ENCODE measurements at regions of chr3 and their contacts with region 1.

Region 1: DNA sequence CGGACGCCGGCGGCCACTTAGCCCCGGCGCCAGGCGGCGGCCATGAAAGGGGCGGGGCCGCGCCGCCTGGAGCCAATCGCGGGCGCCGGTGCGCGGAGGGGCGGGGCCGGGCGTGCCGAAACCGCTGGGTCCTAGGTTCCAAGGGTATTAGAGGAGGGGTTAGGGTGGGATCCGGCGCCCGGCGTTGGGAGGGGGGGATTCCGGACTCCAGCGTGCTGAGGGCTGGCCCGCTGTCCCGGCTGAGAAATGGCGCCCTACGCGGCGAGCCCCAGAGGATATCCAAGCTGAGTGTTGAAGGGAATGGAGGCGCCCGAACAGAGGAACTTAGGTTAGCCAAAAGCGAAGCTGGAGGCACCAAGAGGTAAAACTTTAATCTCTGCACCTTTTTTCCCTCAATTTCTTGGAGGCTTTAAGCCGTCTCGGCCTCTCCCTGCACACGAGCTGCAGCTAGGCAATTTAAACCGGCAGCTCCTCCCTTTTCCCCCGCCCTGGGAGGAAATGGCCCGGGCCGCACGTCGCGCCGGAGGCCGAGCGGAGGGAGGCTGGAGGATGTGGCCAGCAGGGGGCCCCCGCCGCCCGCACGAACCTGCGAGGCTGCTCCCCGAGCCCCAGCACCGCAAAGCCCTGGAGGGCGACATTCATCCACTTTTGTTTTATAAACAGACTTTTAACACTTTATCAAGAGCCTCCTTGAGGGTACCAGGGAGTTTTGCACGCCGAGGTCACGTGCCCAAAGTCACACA is at the start of gene XXYLT1:
- DNase-seq: peak; percentile 92
- H3K4me3 Mint-ChIP-seq: peak within 1 kb of the TSS; percentile 85
- H3K27ac Mint-ChIP-seq: peak within 1 kb of the TSS; percentile 91
- H3K4me1 Mint-ChIP-seq: peaks cover 29% of the 10 kb centered on the region
- H3K27me3 Mint-ChIP-seq: no peaks in the 10 kb centered on the region

Region 2: GRCh38 chr3:195259475-195260279 is 11.6 kb before region 1 on chr3:
- CTCF ChIA-PET with region 1: interaction called, 26 read pairs
- DNase-seq: peak; percentile 90
- H3K4me3 Mint-ChIP-seq: no peak overlapping the region
- H3K27ac Mint-ChIP-seq: peak overlapping the region; percentile 45
- H3K4me1 Mint-ChIP-seq: peaks cover 35% of the 10 kb centered on the region
- H3K27me3 Mint-ChIP-seq: peaks cover 4% of the 10 kb centered on the region

Region 3: DNA sequence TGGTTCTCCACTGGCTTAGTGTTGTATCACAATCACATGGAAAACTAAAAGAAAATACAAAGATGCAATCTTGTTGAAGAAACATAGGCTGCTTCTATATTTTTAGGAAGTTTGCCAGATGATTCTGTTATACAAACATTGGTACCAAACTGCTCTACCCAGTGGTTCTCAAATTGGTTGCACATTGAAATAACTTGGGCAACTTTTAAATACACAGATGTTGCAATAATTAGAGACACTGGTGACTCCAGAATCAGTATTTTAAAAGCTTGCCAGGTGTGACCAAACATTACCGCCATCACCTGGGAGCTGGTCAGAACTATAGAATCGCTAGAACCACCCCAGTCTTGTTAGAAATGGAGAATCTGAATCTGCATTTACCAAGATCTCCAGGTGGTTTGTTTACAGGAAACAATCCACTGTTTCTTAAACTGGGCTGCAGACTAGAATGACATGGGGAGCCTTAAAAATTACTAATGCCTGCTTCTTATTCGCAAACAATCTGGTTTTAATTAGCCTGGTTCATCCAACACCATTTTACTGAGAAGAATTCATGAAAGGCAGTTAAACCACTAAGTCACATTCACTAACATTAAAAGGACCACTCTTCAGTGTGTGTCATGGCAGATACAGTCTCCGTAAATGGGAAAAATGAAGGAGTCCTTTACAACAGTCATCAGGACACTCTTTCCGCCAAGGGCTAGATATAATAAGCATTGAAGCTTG is 95.1 kb after region 1 on chr3:
- CTCF ChIA-PET with region 1: no interaction called
- DNase-seq: no peak
- H3K4me3 Mint-ChIP-seq: no peak overlapping the region
- H3K27ac Mint-ChIP-seq: no peak overlapping the region
- H3K4me1 Mint-ChIP-seq: no peaks in the 10 kb centered on the region
- H3K27me3 Mint-ChIP-seq: no peaks in the 10 kb centered on the region

Region 4: GRCh38 chr3:195522254-195523023 is 251.2 kb after region 1 on chr3:
- CTCF ChIA-PET with region 1: interaction called, 111 read pairs
- DNase-seq: no peak
- H3K4me3 Mint-ChIP-seq: no peak overlapping the region
- H3K27ac Mint-ChIP-seq: peak overlapping the region; percentile 0
- H3K4me1 Mint-ChIP-seq: peaks cover 35% of the 10 kb centered on the region
- H3K27me3 Mint-ChIP-seq: no peaks in the 10 kb centered on the region

Region 5: GRCh38 chr3:195549931-195550519 is 278.7 kb after region 1 on chr3:
- CTCF ChIA-PET with region 1: interaction called, 16 read pairs
- DNase-seq: peak; percentile 92
- H3K4me3 Mint-ChIP-seq: peak overlapping the region; percentile 57
- H3K27ac Mint-ChIP-seq: peak overlapping the region; percentile 92
- H3K4me1 Mint-ChIP-seq: peaks cover 90% of the 10 kb centered on the region
- H3K27me3 Mint-ChIP-seq: no peaks in the 10 kb centered on the region